ENCODE measurements at regions of chr1 and their contacts with region 1.

Region 1: GRCh38 chr1:71093938-71094337 is 13.1 kb upstream of the ZRANB2 start:
- DNase-seq: peak in 2 of 4 experiments; percentile 9 to 15
- ATAC-seq: peak; percentile 63; the same call in 2 of the 3 replicates
- H3K4me3 ChIP-seq: no peak overlapping the region
- H3K27ac ChIP-seq: no peak overlapping the region
- H3K4me1 ChIP-seq: no peaks in the 10 kb centered on the region
- H3K27me3 ChIP-seq: no peaks in the 10 kb centered on the region
- CTCF ChIP-seq: peak in 2 of 3 experiments; percentile 16 to 61; a peak in 4 of 6 replicates
- EP300 ChIP-seq: no peak
- POLR2A ChIP-seq: no peak
- RAD21 ChIP-seq: peak; percentile 48 to 64; a peak in 3 of 4 replicates

Region 2: DNA sequence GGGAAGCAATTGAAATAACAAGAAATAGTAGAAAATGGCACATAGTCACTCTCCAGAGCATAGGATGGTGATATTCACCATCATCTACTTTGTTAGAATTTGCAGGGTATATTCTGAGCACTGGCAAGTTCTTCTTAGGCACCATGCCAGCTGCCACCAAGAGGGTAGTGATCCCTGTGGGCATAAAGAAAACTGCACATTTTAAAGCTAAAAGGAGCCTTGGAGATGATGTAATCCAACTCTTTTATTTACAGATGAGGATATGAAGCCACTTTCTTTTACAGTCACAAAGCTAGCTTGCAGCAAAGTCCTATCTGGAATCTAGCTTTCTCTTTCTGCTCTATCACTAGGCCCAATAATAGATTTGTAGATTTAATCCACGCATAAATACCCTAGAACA is 115.3 kb before region 1 on chr1:
- CTCF ChIA-PET with region 1: no interaction called
- POLR2A ChIA-PET with region 1: no interaction called
- in situ Hi-C with region 1: no loop called
- intact Hi-C with region 1: no loop called
- DNase-seq: no peak
- ATAC-seq: no peak
- H3K4me3 ChIP-seq: no peak overlapping the region
- H3K27ac ChIP-seq: no peak overlapping the region
- H3K4me1 ChIP-seq: no peaks in the 10 kb centered on the region; a peak in 2 of 5 replicates
- H3K27me3 ChIP-seq: no peaks in the 10 kb centered on the region
- CTCF ChIP-seq: no peak
- EP300 ChIP-seq: no peak
- POLR2A ChIP-seq: no peak
- RAD21 ChIP-seq: no peak

Region 3: DNA sequence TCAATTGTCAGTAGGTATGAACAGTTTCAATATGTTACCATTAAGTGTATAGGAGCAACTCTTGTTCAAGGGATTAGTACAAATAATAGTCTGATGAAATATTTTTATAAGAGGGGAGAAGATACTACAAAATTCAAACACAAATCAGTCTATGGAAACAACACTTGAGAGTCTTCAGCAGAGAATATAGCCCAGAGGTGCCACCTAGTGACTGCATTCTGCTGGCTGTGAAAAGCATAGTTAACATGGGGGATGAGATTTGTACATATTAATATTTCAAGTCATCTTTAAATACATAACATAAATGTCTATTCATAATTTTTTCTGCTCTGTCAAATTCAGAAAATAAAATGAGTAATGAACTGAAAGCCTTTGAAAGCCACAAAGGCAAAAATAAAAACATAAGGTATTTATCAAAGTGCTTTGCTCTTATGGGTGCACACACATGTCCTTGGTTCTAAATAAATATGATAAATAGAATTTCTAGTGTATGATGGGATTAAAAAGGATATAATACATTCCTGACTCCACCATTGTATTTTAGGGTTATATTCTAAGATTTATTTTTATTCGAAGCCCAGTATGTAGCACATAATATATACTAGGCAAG is 427.8 kb after region 1 on chr1:
- CTCF ChIA-PET with region 1: no interaction called
- POLR2A ChIA-PET with region 1: no interaction called
- in situ Hi-C with region 1: no loop called
- intact Hi-C with region 1: loop called (anchors 5 kb)
- DNase-seq: peak in 1 of 4 experiments; percentile 6
- ATAC-seq: no peak
- H3K4me3 ChIP-seq: no peak overlapping the region
- H3K27ac ChIP-seq: no peak overlapping the region
- H3K4me1 ChIP-seq: no peaks in the 10 kb centered on the region
- H3K27me3 ChIP-seq: no peaks in the 10 kb centered on the region
- CTCF ChIP-seq: 0 out of 6 replicates have a peak, but pooled peaks of 1 of the 3 experiments have one; percentile 13
- EP300 ChIP-seq: no peak
- POLR2A ChIP-seq: no peak
- RAD21 ChIP-seq: peak; percentile 9 to 24; a peak in 1 of 4 replicates

Region 4: GRCh38 chr1:72037745-72038343 is 943.9 kb after region 1 on chr1:
- CTCF ChIA-PET with region 1: no interaction called
- POLR2A ChIA-PET with region 1: no interaction called
- in situ Hi-C with region 1: no loop called
- intact Hi-C with region 1: loop called (anchors 5 kb)
- DNase-seq: peak; percentile 1 to 21 (median 8)
- ATAC-seq: no peak
- H3K4me3 ChIP-seq: no peak overlapping the region
- H3K27ac ChIP-seq: no peak overlapping the region
- H3K4me1 ChIP-seq: no peaks in the 10 kb centered on the region
- H3K27me3 ChIP-seq: no peaks in the 10 kb centered on the region
- CTCF ChIP-seq: no peak; a peak in 1 of 6 replicates
- EP300 ChIP-seq: no peak
- POLR2A ChIP-seq: no peak
- RAD21 ChIP-seq: peak; percentile 8 to 28; a peak in 1 of 4 replicates

Measured in K562 (cell line).